Sigmoid colon (tissue), 7 donors: ENCODE measurements at regions of chr5 and their contacts with region 1.

Region 1: GRCh38 chr5:74919487-74919886 is 53.3 kb upstream of the FAM169A start:
- DNase-seq: no peak
- H3K4me3 ChIP-seq: no peak overlapping the region
- H3K27ac ChIP-seq: no peak overlapping the region
- H3K4me1 ChIP-seq: no peaks in the 10 kb centered on the region
- H3K27me3 ChIP-seq: no peaks in the 10 kb centered on the region
- CTCF ChIP-seq: peak in 3 of 4 experiments; percentile 40 to 54 (median 51)
- EP300 ChIP-seq: no peak
- POLR2A ChIP-seq: no peak

Region 2: GRCh38 chr5:74567461-74567860 is 352.0 kb before region 1 on chr5:
- intact Hi-C with region 1: no loop called
- DNase-seq: no peak
- H3K4me3 ChIP-seq: no peak overlapping the region
- H3K27ac ChIP-seq: no peak overlapping the region
- H3K4me1 ChIP-seq: no peaks in the 10 kb centered on the region
- H3K27me3 ChIP-seq: no peaks in the 10 kb centered on the region
- CTCF ChIP-seq: no peak
- EP300 ChIP-seq: no peak
- POLR2A ChIP-seq: no peak

Region 3: GRCh38 chr5:74673011-74673790 is 246.3 kb before region 1 on chr5:
- intact Hi-C with region 1: loop called (anchors 5 kb)
- DNase-seq: no peak
- H3K4me3 ChIP-seq: peak overlapping the region; percentile 1 to 45 (median 30)
- H3K27ac ChIP-seq: peak overlapping the region in 2 of 4 donors; percentile 51 to 62
- H3K4me1 ChIP-seq: peaks cover 0 to 13% (median 5%) of the 10 kb centered on the region in 4 donors
- H3K27me3 ChIP-seq: no peaks in the 10 kb centered on the region
- CTCF ChIP-seq: peak in 3 of 4 experiments; percentile 8 to 32 (median 13)
- EP300 ChIP-seq: no peak
- POLR2A ChIP-seq: no peak

Region 4: GRCh38 chr5:74766849-74767578 is 152.5 kb before region 1 on chr5 and contains the starts of genes GFM2 and NSA2:
- intact Hi-C with region 1: loop called (anchors 10 kb)
- DNase-seq: peak; percentile 94
- H3K4me3 ChIP-seq: peak within 1 kb of the TSS; percentile 92 to 96 (median 94)
- H3K27ac ChIP-seq: peak within 1 kb of the TSS; percentile 79 to 89 (median 84)
- H3K4me1 ChIP-seq: peaks cover 0 to 32% (median 27%) of the 10 kb centered on the region in 4 donors
- H3K27me3 ChIP-seq: no peaks in the 10 kb centered on the region
- CTCF ChIP-seq: no peak
- EP300 ChIP-seq: no peak
- POLR2A ChIP-seq: peak in 1 of 2 donors; percentile 24
- total RNA-seq, gene GFM2: 16.0 to 21.4 (median 17.0) TPM
- total RNA-seq, gene NSA2: 141 to 182 (median 168) TPM